ENCODE measurements at regions of chr1 and their contacts with region 1.

Region 1: GRCh38 chr1:157073944-157074767 is 25.5 kb downstream of the ETV3L start:
- DNase-seq: peak; percentile 76
- H3K4me3 ChIP-seq: no peak overlapping the region
- H3K27ac ChIP-seq: no peak overlapping the region
- H3K4me1 ChIP-seq: peaks cover 10% of the 10 kb centered on the region
- H3K27me3 ChIP-seq: no peaks in the 10 kb centered on the region
- CTCF ChIP-seq: peak; percentile 80

Region 2: GRCh38 chr1:156910309-156910782 is 163.8 kb before region 1 on chr1:
- CTCF ChIA-PET with region 1: interaction called, 3 read pairs
- POLR2A ChIA-PET with region 1: no interaction called
- intact Hi-C with region 1: loop called (anchors 5 kb)
- DNase-seq: peak; percentile 57
- H3K4me3 ChIP-seq: no peak overlapping the region
- H3K27ac ChIP-seq: no peak overlapping the region
- H3K4me1 ChIP-seq: no peaks in the 10 kb centered on the region
- H3K27me3 ChIP-seq: no peaks in the 10 kb centered on the region
- CTCF ChIP-seq: peak; percentile 94